ENCODE measurements at regions of chr17 and their contacts with region 1.

Region 1: GRCh38 chr17:49556223-49556971 is 19.3 kb upstream of the NXPH3 start:
- DNase-seq: peak; percentile 95
- CTCF ChIP-seq: peak; percentile 98

Region 2: GRCh38 chr17:49407981-49408501 is 148.4 kb before region 1 on chr17:
- in situ Hi-C with region 1: loop called (anchors 10 kb)
- DNase-seq: peak; percentile 86
- CTCF ChIP-seq: peak; percentile 95

Region 3: DNA sequence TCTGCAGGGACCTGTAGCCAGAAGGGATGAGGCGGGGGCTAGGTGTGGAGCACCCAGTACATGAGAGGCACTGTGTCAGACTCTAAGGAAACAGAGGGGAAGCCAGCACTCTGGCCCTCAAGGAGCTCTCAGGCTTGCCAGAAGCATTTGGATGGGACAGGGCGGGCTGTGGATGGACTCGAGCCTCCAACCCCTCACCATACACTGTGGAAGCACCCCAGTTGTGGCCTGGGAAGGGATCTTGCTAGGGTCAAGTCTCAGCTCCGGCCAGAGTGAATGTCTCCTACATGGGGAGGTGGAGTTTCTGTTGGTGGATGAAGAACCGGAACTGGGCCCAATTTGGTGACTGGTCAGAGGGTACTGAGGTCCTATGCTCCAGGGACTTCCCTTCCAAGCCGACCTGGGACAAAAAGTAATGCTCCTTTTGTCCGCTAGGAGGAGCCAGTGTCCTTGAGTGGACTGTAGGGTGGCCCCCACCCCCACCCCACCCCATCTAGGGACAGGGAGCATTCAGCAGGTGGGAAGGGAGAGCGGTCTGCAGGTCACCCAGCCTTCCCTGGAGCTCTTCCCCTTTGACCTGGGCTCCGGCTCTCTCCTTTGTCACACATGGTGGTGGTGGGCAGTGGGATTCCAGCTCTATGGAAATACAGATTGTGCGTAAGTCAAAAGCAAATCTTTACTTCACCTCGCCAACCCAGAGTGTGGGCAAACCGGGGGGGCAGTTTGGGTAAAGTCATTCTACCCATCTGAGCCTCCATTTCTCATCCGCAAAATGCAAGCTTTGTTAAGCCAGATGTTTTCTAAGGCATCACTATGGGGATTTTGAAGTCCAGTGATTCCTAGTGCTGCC is 121.4 kb before region 1 on chr17:
- in situ Hi-C with region 1: loop called (anchors 10 kb)
- DNase-seq: peak; percentile 84
- CTCF ChIP-seq: peak; percentile 55

Region 4: GRCh38 chr17:49687878-49688491 is 131.6 kb after region 1 on chr17:
- in situ Hi-C with region 1: no loop called
- DNase-seq: no peak
- CTCF ChIP-seq: no peak

Measured in GM13976 (cell line).